Activated T-helper 2 cell treated with anti-CD3 and anti-CD28 coated beads, Interferon-gamma antibody, Interleukin-2, Interleukin-4, amounts not matched to agents 10 μg/mL and 5 μg/mL and 100 μg/mL, durations not matched to agents 14 hours and 24 hours and 36 hours (primary cell): ENCODE measurements at regions of chr13 and their contacts with region 1.

Region 1: GRCh38 chr13:28611654-28612131 is 47.2 kb upstream of the POMP start:
- DNase-seq: peak; percentile 25
- H3K4me3 Mint-ChIP-seq: peak overlapping the region; percentile 56
- H3K27ac Mint-ChIP-seq: peak overlapping the region; percentile 92
- H3K4me1 Mint-ChIP-seq: peaks cover 43% of the 10 kb centered on the region
- H3K27me3 Mint-ChIP-seq: peaks cover 4% of the 10 kb centered on the region

Region 2: GRCh38 chr13:28494776-28495537 is 116.7 kb before region 1 on chr13 and contains the start of gene FLT1:
- intact Hi-C with region 1: loop called (anchors 10 kb)
- DNase-seq: peak; percentile 32
- H3K4me3 Mint-ChIP-seq: peak within 1 kb of the TSS; percentile 75
- H3K27ac Mint-ChIP-seq: no peak within 1 kb of the TSS
- H3K4me1 Mint-ChIP-seq: peaks cover 19% of the 10 kb centered on the region
- H3K27me3 Mint-ChIP-seq: peaks cover 53% of the 10 kb centered on the region
- total RNA-seq, gene FLT1: 29.9 and 32.4 TPM in 2 replicates

Region 3: GRCh38 chr13:28532388-28533124 is 79.1 kb before region 1 on chr13:
- intact Hi-C with region 1: loop called (anchors 2 kb)
- DNase-seq: no peak
- H3K4me3 Mint-ChIP-seq: peak overlapping the region; percentile 49
- H3K27ac Mint-ChIP-seq: no peak overlapping the region
- H3K4me1 Mint-ChIP-seq: no peaks in the 10 kb centered on the region
- H3K27me3 Mint-ChIP-seq: peaks cover 28% of the 10 kb centered on the region

Region 4: GRCh38 chr13:28574617-28575142 is 37.0 kb before region 1 on chr13:
- intact Hi-C with region 1: loop called (anchors 5 kb)
- DNase-seq: no peak
- H3K4me3 Mint-ChIP-seq: no peak overlapping the region
- H3K27ac Mint-ChIP-seq: peak overlapping the region; percentile 82
- H3K4me1 Mint-ChIP-seq: peaks cover 16% of the 10 kb centered on the region
- H3K27me3 Mint-ChIP-seq: peaks cover 6% of the 10 kb centered on the region

Region 5: GRCh38 chr13:28843639-28844038 is 231.9 kb after region 1 on chr13:
- intact Hi-C with region 1: no loop called
- DNase-seq: no peak
- H3K4me3 Mint-ChIP-seq: no peak overlapping the region
- H3K27ac Mint-ChIP-seq: no peak overlapping the region
- H3K4me1 Mint-ChIP-seq: no peaks in the 10 kb centered on the region
- H3K27me3 Mint-ChIP-seq: no peaks in the 10 kb centered on the region